Esophagus squamous epithelium (tissue), 5 donors: ENCODE measurements at regions of chr1 and their contacts with region 1.

Region 1: DNA sequence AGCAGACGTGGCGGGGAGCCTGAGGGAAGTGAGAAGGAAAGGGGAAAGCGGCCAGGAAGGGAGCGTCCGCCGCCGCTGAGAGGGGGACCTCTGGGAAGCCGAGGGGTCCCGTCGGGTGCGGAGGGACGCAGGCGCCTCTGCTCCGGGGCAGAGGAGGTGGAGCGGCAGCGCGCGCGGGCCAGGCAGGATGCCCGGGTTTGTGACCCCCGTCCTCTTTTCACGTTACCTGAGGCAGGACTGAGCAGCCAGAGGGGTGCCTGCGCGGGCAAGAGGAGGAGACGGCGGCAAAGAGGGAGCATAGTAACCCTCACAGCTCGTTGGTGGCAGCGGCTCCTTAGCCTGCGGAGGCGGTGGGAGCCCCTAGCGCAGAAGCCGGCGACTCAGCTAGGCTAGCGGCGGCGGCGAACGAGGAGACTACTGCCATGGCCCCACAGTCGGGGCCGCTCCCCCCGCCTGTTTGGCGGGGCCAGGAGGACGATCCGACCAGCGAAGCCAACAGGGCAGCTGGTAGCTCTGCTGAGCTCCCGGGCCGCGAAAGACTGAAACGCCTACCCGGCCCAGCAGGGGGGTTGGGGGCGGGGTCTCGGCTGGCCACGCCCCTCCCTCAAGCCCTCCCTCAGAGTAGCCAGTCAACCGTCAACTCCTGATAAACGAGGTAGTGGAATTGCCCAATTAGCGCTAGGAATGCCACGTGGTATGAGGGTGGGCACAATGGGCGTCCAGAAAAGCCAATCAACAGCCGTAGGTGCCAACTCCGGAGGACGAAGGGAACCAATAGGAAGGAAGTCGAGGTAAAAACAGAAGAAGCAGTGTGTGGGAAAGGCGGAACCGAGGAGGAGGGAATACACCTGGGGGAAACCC is at the start of gene TESK2:
- DNase-seq: peak; percentile 94
- H3K4me3 ChIP-seq: peak within 1 kb of the TSS; percentile 72 to 95 (median 85)
- H3K27ac ChIP-seq: peak within 1 kb of the TSS; percentile 89 to 92 (median 91)
- H3K4me1 ChIP-seq: peaks cover 0 to 46% (median 16%) of the 10 kb centered on the region in 3 donors
- H3K27me3 ChIP-seq: no peaks in the 10 kb centered on the region
- CTCF ChIP-seq: peak in 4 of 6 experiments; percentile 44 to 58 (median 54)
- POLR2A ChIP-seq: peak in 2 of 4 donors; percentile 71 to 94
- total RNA-seq, gene TESK2: 4.2 to 8.4 (median 5.9) TPM

Region 2: GRCh38 chr1:45359882-45360513 is 130.9 kb before region 1 on chr1:
- intact Hi-C with region 1: loop called (anchors 2 kb)
- DNase-seq: no peak
- H3K4me3 ChIP-seq: peak overlapping the region in 1 of 4 donors; percentile 25
- H3K27ac ChIP-seq: peak overlapping the region; percentile 71 to 87 (median 86)
- H3K4me1 ChIP-seq: peaks cover 14 to 46% (median 17%) of the 10 kb centered on the region in 3 donors
- H3K27me3 ChIP-seq: no peaks in the 10 kb centered on the region
- CTCF ChIP-seq: peak; percentile 54 to 82 (median 71)
- POLR2A ChIP-seq: no peak